ENCODE measurements at regions of chr12 and their contacts with region 1.

Region 1: DNA sequence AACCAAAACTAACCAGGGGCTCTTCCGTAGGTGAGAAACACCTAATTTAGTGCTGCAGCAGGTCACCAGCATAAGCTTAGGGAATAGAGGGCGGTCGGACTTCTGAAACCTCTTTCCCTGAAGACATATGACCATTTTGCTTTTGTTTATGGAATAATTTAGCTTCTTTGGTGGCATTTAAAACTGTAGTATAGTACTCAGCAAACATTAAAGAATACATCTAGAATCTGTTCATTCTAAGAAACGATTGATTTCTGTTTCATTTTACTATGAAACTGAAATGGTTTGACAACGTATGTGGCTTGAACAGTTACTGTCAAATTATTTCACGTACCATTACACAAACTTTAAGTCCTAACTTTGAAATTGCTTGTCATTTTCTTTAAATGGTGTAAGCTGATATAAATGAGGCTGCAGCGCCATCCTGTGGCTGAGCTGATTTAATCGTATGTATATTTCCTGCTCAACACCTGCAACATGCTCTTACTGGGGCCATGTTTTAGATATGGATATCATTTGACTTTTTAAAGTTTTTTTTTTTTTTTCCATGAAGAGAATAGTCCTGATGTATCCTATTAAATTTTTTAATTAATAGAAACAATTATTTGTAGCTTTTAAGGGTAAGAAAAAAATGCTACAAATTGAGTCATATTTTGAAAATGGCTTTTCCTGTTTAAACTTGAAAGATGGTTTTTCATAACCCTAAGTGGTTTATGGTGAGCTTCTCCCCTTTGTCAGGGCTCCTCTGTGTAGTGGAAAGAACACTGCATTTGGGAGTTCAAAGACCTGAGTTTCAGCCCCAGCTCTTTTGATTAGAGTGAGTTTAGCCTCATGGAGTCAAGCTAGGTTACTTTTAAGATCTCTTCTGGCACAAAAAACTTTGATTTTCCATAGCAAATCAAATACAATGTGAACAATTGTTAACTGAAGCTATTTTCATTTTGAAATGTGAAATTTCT is 27.4 kb downstream of the CFAP54 start:
- DNase-seq: peak; percentile 54
- ATAC-seq: peak; percentile 88
- H3K4me3 ChIP-seq: no peak overlapping the region
- H3K27ac ChIP-seq: no peak overlapping the region
- H3K4me1 ChIP-seq: no peaks in the 10 kb centered on the region
- H3K27me3 ChIP-seq: no peaks in the 10 kb centered on the region
- CTCF ChIP-seq: peak; percentile 69; the same call in 1 of the 2 replicates

Region 2: GRCh38 chr12:96015672-96016071 is 501.1 kb before region 1 on chr12:
- CTCF ChIA-PET with region 1: no interaction called
- POLR2A ChIA-PET with region 1: no interaction called
- in situ Hi-C with region 1: no loop called
- intact Hi-C with region 1: loop called (anchors 5 kb)
- DNase-seq: no peak
- ATAC-seq: peak; percentile 98
- H3K4me3 ChIP-seq: no peak overlapping the region
- H3K27ac ChIP-seq: no peak overlapping the region
- H3K4me1 ChIP-seq: no peaks in the 10 kb centered on the region
- H3K27me3 ChIP-seq: no peaks in the 10 kb centered on the region
- CTCF ChIP-seq: peak; percentile 77

Region 3: DNA sequence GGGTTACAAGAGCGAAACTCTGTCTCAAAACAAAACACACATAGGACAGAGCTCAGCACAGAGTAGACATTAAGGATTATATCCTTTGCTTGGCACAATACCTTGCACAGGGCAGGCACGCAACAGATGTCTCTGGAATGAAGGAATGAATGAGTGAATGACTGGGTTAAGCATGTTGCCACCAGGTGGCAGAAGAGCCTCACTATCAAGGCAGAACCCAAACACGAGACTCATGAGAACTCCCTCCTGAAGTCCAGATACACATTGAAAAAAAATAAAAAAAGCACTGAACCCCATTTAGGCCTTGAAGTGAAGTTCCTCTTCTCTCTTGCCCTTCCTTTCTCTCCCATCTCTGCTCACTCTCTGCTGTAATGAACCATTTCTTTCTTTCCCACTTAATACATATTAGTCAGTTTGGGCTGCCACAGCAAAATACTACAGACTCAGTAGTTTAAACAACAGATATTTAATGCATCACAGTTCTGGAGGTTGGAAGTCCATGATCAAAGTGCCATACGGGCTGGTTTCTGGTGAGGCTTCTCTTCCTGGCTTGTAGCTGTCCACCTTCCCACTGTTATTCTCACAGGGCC is 454.8 kb before region 1 on chr12:
- CTCF ChIA-PET with region 1: interaction called, 4 read pairs
- POLR2A ChIA-PET with region 1: no interaction called
- in situ Hi-C with region 1: no loop called
- intact Hi-C with region 1: loop called (anchors 1 kb)
- DNase-seq: peak; percentile 64
- ATAC-seq: peak; percentile 93
- H3K4me3 ChIP-seq: no peak overlapping the region
- H3K27ac ChIP-seq: no peak overlapping the region
- H3K4me1 ChIP-seq: no peaks in the 10 kb centered on the region
- H3K27me3 ChIP-seq: no peaks in the 10 kb centered on the region
- CTCF ChIP-seq: peak; percentile 83

Region 4: DNA sequence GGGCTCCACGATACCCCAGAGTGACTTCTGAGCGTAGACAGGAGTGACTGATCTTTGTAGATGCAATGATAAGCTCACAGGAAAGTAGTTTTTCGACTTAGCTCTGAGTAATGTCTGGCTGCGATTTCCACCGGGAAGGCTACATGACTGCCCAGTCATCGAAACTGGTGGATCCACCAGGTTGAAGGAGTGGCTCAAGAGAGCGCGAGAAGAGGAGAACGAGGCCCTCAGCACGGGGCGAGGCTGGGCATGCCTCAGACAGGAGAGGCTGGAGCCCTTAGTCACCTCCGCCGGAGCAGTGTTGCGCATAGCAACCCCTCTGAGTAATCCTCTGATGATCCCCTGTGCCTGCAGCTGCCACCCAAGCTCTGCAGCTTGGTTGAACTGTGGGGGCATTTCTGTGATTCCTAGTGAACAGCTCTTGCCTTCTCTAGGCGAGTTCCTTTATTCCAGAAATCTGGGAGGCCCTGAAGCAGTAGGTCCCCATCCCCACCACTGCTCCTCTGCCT is 297.0 kb before region 1 on chr12:
- CTCF ChIA-PET with region 1: interaction called, 9 read pairs
- POLR2A ChIA-PET with region 1: no interaction called
- in situ Hi-C with region 1: no loop called
- intact Hi-C with region 1: loop called (anchors 5 kb)
- DNase-seq: no peak
- ATAC-seq: peak; percentile 96
- H3K4me3 ChIP-seq: peak overlapping the region; percentile 21 to 49
- H3K27ac ChIP-seq: peak overlapping the region; percentile 89
- H3K4me1 ChIP-seq: peaks cover 18% of the 10 kb centered on the region
- H3K27me3 ChIP-seq: no peaks in the 10 kb centered on the region
- CTCF ChIP-seq: no peak

Region 5: GRCh38 chr12:96274331-96274730 is 242.4 kb before region 1 on chr12:
- CTCF ChIA-PET with region 1: no interaction called
- POLR2A ChIA-PET with region 1: no interaction called
- in situ Hi-C with region 1: no loop called
- intact Hi-C with region 1: loop called (anchors 10 kb)
- DNase-seq: no peak
- ATAC-seq: no peak
- H3K4me3 ChIP-seq: no peak overlapping the region
- H3K27ac ChIP-seq: no peak overlapping the region
- H3K4me1 ChIP-seq: no peaks in the 10 kb centered on the region
- H3K27me3 ChIP-seq: no peaks in the 10 kb centered on the region
- CTCF ChIP-seq: no peak

Region 6: DNA sequence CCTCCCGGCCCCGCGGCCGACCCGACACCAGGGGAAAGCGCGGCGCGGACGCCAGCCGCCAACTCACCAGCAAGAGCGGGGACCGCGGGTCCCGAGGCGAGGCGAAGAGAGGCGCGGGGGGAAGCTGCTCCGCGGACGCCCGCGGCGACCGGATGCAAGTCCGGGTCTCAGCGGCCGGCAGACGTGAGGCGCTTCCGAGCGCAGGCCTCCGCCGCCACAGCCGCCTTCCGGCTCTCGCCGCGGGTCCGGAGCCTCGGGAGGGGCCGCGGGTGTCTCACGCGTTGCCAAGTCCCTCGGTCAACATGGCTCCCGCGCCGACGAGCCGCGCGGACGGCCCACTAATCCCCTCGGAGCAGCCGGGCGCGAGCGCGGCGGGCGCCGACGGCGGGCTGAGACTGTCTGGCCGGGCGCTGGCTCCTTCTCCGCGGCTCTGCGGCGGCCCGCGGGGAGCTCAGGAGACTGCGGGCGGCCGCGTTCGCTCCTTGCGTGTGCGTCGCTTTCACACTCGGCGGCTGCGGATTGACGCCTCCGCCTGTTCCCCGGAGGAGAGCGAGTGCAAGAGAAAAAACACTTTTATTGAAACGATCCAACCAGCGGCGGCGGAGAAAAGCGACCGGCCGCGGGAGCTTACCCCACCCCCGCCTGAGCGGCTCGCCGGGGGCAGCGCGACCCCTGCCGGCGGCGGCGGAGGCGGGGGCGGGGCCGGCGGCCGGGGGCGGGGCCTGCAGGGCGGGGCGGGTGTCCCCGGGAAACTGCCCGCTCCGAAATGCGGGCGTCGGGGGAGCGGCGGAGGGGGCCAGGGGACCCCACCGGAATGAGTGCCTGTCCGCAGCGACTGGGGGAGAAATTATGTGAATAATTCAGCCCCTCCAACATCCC is 116.6 kb before region 1 on chr12 and contains the start of gene CDK17:
- CTCF ChIA-PET with region 1: interaction called, 8 read pairs
- POLR2A ChIA-PET with region 1: no interaction called
- in situ Hi-C with region 1: no loop called
- intact Hi-C with region 1: loop called (anchors 10 kb)
- DNase-seq: no peak
- ATAC-seq: peak; percentile 88
- H3K4me3 ChIP-seq: peak within 1 kb of the TSS; percentile 81 to 93
- H3K27ac ChIP-seq: peak within 1 kb of the TSS; percentile 79
- H3K4me1 ChIP-seq: peaks cover 37% of the 10 kb centered on the region; the same call in 1 of the 2 replicates
- H3K27me3 ChIP-seq: no peaks in the 10 kb centered on the region
- CTCF ChIP-seq: peak; percentile 96
- total RNA-seq, gene CDK17: 23.2 TPM

Region 7: DNA sequence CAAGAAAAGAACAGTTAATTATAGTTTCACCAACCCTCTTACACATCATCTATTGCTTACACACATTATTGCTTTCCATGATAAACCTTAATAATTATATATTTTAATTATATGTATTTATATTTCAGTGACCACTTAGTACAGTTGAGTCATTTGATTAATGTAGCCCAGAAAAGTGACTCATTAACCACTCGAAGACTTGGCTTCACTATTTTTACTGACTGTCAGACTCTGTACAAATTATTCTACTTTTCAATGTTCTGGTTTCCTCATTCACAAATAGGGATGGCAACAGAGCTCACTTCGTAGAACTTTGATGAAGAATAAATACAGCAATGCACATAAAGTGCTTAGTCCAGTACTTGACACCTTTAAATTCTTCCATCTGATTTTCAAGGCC is 70.9 kb after region 1 on chr12:
- CTCF ChIA-PET with region 1: interaction called, 22 read pairs
- POLR2A ChIA-PET with region 1: no interaction called
- in situ Hi-C with region 1: no loop called
- intact Hi-C with region 1: no loop called
- DNase-seq: no peak
- ATAC-seq: no peak
- H3K4me3 ChIP-seq: no peak overlapping the region
- H3K27ac ChIP-seq: no peak overlapping the region
- H3K4me1 ChIP-seq: no peaks in the 10 kb centered on the region
- H3K27me3 ChIP-seq: no peaks in the 10 kb centered on the region; the same call in none of the 2 replicates
- CTCF ChIP-seq: no peak

Measured in Panc1 (cell line).